PC-3 (cell line): ENCODE measurements at regions of chr6 and their contacts with region 1.

Region 1: GRCh38 chr6:142474531-142475289 is 172.9 kb downstream of the ADGRG6 start:
- DNase-seq: peak; percentile 78
- ATAC-seq: peak; percentile 97
- H3K4me3 ChIP-seq: peak overlapping the region; percentile 48; the same call in 1 of the 2 replicates
- H3K27ac ChIP-seq: 0 out of 2 replicates have a peak overlapping the region, but pooled peaks have one; percentile 2
- H3K4me1 ChIP-seq: no peaks in the 10 kb centered on the region
- H3K27me3 ChIP-seq: no peaks in the 10 kb centered on the region
- CTCF ChIP-seq: peak; percentile 78

Region 2: DNA sequence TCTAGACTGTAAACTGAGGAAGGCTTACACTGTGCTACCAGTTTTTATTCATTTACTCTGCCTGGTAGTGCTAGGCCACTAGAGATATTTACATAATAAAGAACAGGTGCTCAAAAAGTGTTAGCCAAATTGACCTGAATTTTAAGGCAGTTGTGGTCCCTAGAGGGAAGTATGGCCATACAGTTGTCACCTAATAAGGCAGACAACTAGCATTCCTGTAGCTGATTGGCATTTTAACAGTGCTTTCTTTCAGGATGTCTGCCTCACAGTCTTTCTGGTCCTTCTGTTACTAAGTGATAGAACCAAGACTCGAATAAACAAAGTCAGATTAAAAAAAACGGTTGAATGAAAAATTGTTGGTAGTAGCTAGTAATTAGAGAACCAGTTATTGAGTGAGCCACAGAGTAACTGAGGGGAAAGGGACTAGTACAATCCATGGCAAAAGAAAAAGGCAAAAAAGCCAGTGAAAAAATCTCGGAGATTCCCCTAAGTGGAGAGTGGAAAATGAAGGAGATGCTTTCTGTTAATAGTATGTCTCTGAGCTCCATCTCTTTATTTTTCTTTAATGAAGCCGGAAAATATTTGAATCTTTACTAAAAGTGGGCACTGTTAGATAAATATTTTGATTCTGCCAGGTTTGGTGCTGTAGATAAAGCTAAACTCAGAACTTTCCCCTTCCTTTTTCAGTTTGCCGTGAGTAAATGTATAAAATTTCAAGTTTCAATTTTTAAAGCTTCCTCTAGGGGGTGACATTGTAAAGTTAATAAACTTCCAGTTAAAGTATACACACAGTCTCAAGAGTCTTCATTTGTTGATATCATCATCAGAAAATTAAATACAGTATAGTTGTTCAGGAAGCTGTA is 318.6 kb before region 1 on chr6:
- CTCF ChIA-PET with region 1: no interaction called
- POLR2A ChIA-PET with region 1: no interaction called
- intact Hi-C with region 1: loop called (anchors 10 kb)
- DNase-seq: peak; percentile 64
- ATAC-seq: peak; percentile 46
- H3K4me3 ChIP-seq: no peak overlapping the region
- H3K27ac ChIP-seq: no peak overlapping the region
- H3K4me1 ChIP-seq: peaks cover 26% of the 10 kb centered on the region
- H3K27me3 ChIP-seq: no peaks in the 10 kb centered on the region
- CTCF ChIP-seq: peak; percentile 62

Region 3: GRCh38 chr6:142463988-142464387 is 10.7 kb before region 1 on chr6:
- CTCF ChIA-PET with region 1: no interaction called
- POLR2A ChIA-PET with region 1: interaction called, 13 read pairs
- intact Hi-C with region 1: no loop called
- DNase-seq: no peak
- ATAC-seq: no peak
- H3K4me3 ChIP-seq: no peak overlapping the region
- H3K27ac ChIP-seq: no peak overlapping the region
- H3K4me1 ChIP-seq: no peaks in the 10 kb centered on the region
- H3K27me3 ChIP-seq: no peaks in the 10 kb centered on the region
- CTCF ChIP-seq: no peak

Region 4: DNA sequence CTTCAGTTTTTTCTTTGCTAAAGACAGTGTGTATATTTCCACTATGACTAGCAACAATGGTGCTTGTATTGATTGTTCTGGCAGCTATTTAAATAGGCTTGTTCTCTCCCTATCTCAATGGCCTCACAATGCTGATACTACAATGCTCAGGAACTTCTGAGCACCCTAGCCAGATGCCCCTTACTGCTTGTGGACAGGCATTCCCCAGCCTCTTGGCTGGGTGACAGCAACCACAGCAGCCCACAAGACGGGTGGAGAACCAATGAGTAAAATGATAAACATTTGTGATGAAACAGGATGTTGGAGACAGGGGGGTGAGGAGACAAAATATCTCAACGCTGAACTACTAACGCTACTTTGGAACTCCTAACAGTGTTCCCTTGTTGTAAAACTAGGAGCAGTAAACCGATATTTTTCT is 427.9 kb after region 1 on chr6:
- CTCF ChIA-PET with region 1: no interaction called
- POLR2A ChIA-PET with region 1: no interaction called
- intact Hi-C with region 1: loop called (anchors 10 kb)
- DNase-seq: peak; percentile 92
- ATAC-seq: peak; percentile 92
- H3K4me3 ChIP-seq: peak overlapping the region; percentile 58; the same call in 1 of the 2 replicates
- H3K27ac ChIP-seq: peak overlapping the region; percentile 92
- H3K4me1 ChIP-seq: peaks cover 33% of the 10 kb centered on the region
- H3K27me3 ChIP-seq: no peaks in the 10 kb centered on the region
- CTCF ChIP-seq: no peak